IMR-90 (cell line): ENCODE measurements at regions of chr22 and their contacts with region 1.

Region 1: DNA sequence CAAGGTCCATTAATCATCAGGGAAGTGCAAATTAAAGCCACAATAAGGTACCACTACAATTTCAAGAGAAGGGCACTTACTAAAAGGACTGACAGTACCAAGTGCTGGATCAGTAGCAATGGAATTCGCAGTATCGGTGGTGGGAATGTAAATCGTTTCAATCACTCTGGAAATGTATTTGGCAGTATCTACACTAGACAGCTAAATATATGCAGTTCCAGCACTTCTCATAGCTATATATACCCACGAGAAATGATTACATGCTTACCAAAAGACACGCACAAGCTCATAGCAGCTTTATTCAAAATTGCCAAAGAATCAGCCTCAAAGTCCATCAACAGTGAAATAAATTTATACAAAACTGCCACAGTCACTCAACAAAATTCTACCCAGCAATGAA is 4.4 kb upstream of the ZNF280B start:
- DNase-seq: no peak
- ATAC-seq: no peak
- H3K4me3 ChIP-seq: no peak overlapping the region
- H3K27ac ChIP-seq: no peak overlapping the region
- H3K4me1 ChIP-seq: no peaks in the 10 kb centered on the region
- H3K27me3 ChIP-seq: peaks cover 5% of the 10 kb centered on the region
- CTCF ChIP-seq: no peak
- POLR2A ChIP-seq: no peak
- RAD21 ChIP-seq: no peak

Region 2: DNA sequence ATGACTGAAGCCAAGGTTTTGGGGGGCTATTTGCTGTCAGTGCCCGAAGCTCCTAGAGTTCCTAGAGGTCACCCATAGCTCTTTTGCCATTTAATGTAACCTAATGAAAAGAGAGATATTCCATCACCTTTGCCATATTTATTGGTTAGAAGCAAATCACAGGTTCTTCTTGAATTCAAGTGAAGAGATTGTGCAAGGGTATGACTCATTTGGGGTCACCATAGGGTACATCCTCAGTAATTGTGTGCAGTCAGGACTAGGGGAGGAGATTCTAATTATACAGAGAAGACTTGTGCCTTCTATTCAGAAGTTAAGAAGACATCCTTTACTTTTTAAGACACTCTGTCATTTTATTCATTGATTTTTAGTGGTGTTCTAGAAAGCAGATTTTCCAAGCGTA is 53.0 kb after region 1 on chr22:
- CTCF ChIA-PET with region 1: no interaction called
- POLR2A ChIA-PET with region 1: no interaction called
- dilution Hi-C with region 1: no loop called
- in situ Hi-C with region 1: no loop called
- intact Hi-C with region 1: loop called (anchors 5 kb)
- DNase-seq: peak; percentile 44
- ATAC-seq: no peak
- H3K4me3 ChIP-seq: no peak overlapping the region
- H3K27ac ChIP-seq: no peak overlapping the region
- H3K4me1 ChIP-seq: no peaks in the 10 kb centered on the region
- H3K27me3 ChIP-seq: peaks cover 5% of the 10 kb centered on the region
- CTCF ChIP-seq: no peak
- POLR2A ChIP-seq: no peak
- RAD21 ChIP-seq: no peak

Region 3: GRCh38 chr22:22684580-22685561 is 171.9 kb after region 1 on chr22:
- CTCF ChIA-PET with region 1: no interaction called
- POLR2A ChIA-PET with region 1: no interaction called
- dilution Hi-C with region 1: no loop called
- in situ Hi-C with region 1: no loop called
- intact Hi-C with region 1: no loop called
- DNase-seq: peak; percentile 88
- ATAC-seq: peak; percentile 70
- H3K4me3 ChIP-seq: no peak overlapping the region
- H3K27ac ChIP-seq: no peak overlapping the region
- H3K4me1 ChIP-seq: peaks cover 32% of the 10 kb centered on the region
- H3K27me3 ChIP-seq: no peaks in the 10 kb centered on the region
- CTCF ChIP-seq: peak; percentile 26; the same call in 1 of the 2 replicates
- POLR2A ChIP-seq: no peak
- RAD21 ChIP-seq: no peak